AG04450 (cell line): ENCODE measurements at regions of chr6 and their contacts with region 1.

Region 1: DNA sequence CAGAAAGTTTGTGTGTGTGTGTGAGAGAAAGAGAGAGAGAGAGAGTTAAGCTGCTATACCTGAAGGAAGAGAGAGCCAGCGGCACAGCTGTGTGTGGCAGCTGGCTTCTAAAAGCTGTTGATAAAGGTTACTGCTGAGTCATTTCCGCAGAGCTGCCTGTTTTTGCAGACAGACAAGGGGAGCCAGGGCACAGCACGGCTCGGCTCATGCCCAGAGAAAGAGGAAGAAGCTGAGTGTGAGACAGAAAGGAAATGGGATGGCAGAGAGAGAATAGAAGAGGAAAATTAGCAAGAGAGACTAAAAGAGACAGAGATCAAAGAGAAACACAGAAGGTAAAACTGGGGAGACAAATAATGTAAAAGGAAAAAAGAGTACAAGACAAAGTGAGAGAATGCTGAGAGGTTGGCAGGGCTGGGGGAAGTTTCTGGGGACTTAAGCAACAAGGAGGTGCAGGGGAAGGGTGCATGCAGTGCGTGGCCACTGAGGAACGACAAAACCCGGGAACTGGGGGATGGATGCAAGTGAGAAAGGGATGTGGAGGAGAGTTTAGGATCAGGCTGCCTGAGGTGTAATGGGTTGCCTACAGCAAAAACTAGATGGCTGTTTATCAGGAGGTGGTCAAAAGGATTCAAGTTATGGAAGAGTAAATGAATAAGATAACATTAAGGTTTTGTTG is 22.7 kb downstream of the HLA-A start:
- DNase-seq: peak; percentile 74
- H3K4me3 ChIP-seq: peak overlapping the region; percentile 56
- H3K27ac ChIP-seq: peak overlapping the region; percentile 94
- H3K27me3 ChIP-seq: no peaks in the 10 kb centered on the region
- CTCF ChIP-seq: no peak

Region 2: DNA sequence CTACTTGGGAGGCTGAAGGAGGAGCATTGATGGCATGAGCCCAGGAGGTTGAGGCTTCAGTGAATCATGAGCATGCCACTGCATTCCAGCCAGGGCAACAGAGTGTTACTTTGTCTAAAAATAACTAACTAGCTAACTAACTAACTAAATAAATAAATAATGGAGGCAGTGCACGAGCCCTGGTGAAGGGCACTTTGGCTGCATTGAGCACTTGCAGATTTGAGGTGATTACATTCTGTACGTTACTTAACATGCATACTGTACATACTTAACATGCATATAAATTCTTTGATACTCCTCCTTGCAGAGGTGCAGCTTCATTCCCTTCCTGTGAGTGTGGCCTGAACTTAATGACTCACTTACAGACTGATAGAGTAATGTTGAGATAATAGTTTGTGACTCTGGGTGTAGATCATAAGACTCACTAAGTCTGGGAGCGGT is 12.0 kb before region 1 on chr6:
- CTCF ChIA-PET with region 1: no interaction called
- POLR2A ChIA-PET with region 1: interaction called, 12 read pairs
- DNase-seq: peak; percentile 41
- H3K4me3 ChIP-seq: no peak overlapping the region
- H3K27ac ChIP-seq: peak overlapping the region; percentile 42
- H3K27me3 ChIP-seq: no peaks in the 10 kb centered on the region
- CTCF ChIP-seq: no peak